IMR-90 (cell line): ENCODE measurements at regions of chr12 and their contacts with region 1.

Region 1: GRCh38 chr12:14739489-14739888 is 43.1 kb upstream of the GUCY2C start:
- DNase-seq: no peak
- ATAC-seq: no peak
- H3K4me3 ChIP-seq: no peak overlapping the region
- H3K27ac ChIP-seq: no peak overlapping the region
- H3K4me1 ChIP-seq: no peaks in the 10 kb centered on the region
- H3K27me3 ChIP-seq: no peaks in the 10 kb centered on the region
- CTCF ChIP-seq: no peak
- POLR2A ChIP-seq: no peak
- RAD21 ChIP-seq: no peak

Region 2: GRCh38 chr12:15151161-15152120 is 412.0 kb after region 1 on chr12:
- CTCF ChIA-PET with region 1: no interaction called
- POLR2A ChIA-PET with region 1: no interaction called
- dilution Hi-C with region 1: no loop called
- in situ Hi-C with region 1: no loop called
- intact Hi-C with region 1: loop called (anchors 10 kb)
- DNase-seq: no peak
- ATAC-seq: no peak
- H3K4me3 ChIP-seq: no peak overlapping the region
- H3K27ac ChIP-seq: no peak overlapping the region
- H3K4me1 ChIP-seq: no peaks in the 10 kb centered on the region
- H3K27me3 ChIP-seq: no peaks in the 10 kb centered on the region; the same call in 1 of the 2 replicates
- CTCF ChIP-seq: peak; percentile 31
- POLR2A ChIP-seq: no peak
- RAD21 ChIP-seq: no peak